ENCODE measurements at regions of chr10 and their contacts with region 1.

Region 1: GRCh38 chr10:94320285-94320914 is 42.3 kb downstream of the NOC3L start:
- DNase-seq: peak; percentile 66 to 84
- ATAC-seq: no peak
- H3K4me3 ChIP-seq: no peak overlapping the region
- H3K27ac ChIP-seq: no peak overlapping the region
- H3K4me1 ChIP-seq: peaks cover 0 to 1% of the 10 kb centered on the region in 2 donors
- H3K27me3 ChIP-seq: no peaks in the 10 kb centered on the region

Region 2: GRCh38 chr10:93458821-93459257 is 861.6 kb before region 1 on chr10:
- intact Hi-C with region 1: no loop called
- DNase-seq: peak; percentile 91 to 92
- ATAC-seq: peak; percentile 92
- H3K4me3 ChIP-seq: no peak overlapping the region
- H3K27ac ChIP-seq: peak overlapping the region; percentile 87 to 96
- H3K4me1 ChIP-seq: peaks cover 0 to 6% of the 10 kb centered on the region in 2 donors
- H3K27me3 ChIP-seq: no peaks in the 10 kb centered on the region

Region 3: DNA sequence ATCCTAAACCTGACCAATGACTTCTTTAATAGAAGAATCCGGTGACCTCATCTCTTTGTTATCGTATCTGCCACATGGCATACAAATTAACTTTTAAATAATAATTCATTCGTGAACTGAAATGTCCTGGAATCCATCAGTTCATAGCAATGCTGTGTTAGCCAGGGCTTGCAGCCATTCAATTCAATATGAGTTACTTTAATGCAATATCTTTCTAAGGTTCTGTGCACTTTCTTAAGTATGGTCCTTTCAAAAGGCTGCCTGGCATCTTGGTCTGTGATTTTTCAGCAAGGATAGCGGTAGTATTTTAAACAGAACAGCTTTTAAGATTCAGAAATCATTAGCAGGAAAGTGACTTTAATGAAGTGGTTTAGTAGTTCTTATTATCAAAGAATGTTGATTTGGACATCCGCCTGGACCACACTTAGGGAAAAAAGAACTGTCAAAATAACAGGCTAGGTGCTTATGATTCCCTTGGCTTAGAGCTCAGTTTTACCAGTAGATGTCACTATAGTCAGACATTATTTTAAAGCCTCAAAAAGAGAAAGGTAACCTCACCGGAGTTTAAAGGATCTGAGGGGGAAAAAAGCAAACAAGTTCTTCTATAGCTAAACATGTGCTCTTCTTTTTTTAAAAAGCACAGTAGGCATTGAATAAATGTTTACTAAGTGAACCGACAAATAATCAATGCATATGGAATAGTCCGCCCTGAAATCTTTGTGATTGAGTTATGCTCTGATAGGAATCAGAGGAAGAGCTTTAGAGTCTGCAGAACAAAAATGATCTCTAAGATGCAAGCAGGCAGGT is 403.9 kb before region 1 on chr10:
- intact Hi-C with region 1: loop called (anchors 5 kb)
- DNase-seq: no peak
- ATAC-seq: no peak
- H3K4me3 ChIP-seq: no peak overlapping the region
- H3K27ac ChIP-seq: no peak overlapping the region
- H3K4me1 ChIP-seq: no peaks in the 10 kb centered on the region
- H3K27me3 ChIP-seq: no peaks in the 10 kb centered on the region

Region 4: DNA sequence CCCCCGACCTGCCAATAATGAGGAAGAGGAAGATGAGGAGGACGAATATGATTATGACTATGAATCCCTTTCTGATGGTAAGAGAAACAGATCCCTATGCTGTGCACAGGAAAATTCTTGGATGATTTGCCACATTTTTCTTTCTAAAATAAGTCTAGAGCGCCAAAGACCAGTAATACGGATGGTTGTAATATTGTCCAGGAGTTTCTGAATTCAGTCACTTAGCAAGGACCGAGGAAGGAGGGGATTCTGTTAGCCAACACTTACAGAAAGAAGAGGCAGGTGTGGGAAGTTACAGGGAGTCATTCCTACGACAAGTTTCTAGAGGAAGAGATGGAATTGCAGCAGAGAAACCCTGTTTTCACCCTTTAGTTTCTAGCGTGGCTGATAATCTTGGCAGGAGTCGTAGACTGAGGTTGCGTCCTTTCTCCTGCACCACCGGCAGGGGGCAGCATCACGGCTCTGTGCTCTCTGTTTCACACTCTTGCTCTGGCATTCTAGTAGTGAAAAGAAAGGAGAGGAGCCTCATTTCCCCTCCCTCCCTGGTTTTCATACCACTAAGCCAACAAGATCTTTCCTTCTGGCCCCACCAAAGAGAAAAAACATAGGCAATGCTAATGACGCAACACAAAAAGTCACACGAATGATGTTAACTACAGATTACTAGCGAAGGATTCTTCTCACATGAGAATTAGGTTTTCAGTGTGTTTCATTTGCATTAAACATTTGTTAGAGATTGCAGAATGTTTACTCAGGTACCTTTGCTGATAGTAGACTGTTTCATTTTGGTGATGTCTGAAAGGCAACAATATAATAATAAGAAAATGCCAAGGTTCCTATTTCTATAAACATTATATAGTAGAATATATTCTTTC is 40.3 kb before region 1 on chr10:
- intact Hi-C with region 1: loop called in 1 of 2 experiments (anchors 5 kb)
- DNase-seq: peak; percentile 71 to 85
- ATAC-seq: peak; percentile 85
- H3K4me3 ChIP-seq: no peak overlapping the region
- H3K27ac ChIP-seq: no peak overlapping the region
- H3K4me1 ChIP-seq: no peaks in the 10 kb centered on the region
- H3K27me3 ChIP-seq: no peaks in the 10 kb centered on the region

Region 5: GRCh38 chr10:94630017-94630688 is 309.8 kb after region 1 on chr10:
- intact Hi-C with region 1: no loop called
- DNase-seq: no peak
- ATAC-seq: no peak
- H3K4me3 ChIP-seq: no peak overlapping the region
- H3K27ac ChIP-seq: no peak overlapping the region
- H3K4me1 ChIP-seq: no peaks in the 10 kb centered on the region
- H3K27me3 ChIP-seq: no peaks in the 10 kb centered on the region